OCI-LY7 (cell line): ENCODE measurements at regions of chr12 and their contacts with region 1.

Region 1: DNA sequence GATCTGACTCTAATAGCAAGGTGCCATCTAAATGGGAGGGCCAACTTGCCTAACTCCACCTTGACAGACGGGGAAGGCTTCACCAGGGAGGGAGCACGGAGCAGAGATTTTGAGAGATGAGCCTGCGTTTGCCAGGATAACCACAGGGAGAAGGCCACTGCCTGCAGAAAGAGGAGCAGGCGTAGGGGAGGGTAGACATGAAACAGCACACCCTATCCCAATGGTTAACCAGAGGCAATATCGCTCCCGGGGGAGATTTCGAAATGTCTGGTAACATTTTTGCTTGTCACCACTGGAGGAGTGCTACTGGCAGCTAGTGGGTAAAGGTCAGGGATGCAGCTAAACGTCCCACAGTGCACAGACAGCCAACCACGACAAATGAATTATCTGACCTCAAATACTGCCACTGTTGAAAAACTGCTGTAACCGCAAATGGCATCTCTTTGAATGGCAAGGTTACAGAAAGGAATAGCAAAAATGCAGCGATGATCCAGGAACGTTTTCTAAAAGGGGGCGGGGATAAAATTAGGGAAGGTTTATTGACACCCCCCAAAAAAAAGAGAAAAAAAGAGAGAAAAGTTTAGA is 126.0 kb upstream of the ATF7IP start:
- DNase-seq: peak; percentile 75
- H3K4me3 ChIP-seq: peak overlapping the region; percentile 57
- H3K27ac ChIP-seq: peak overlapping the region; percentile 94
- H3K4me1 ChIP-seq: peaks cover 32% of the 10 kb centered on the region
- CTCF ChIP-seq: peak; percentile 60

Region 2: DNA sequence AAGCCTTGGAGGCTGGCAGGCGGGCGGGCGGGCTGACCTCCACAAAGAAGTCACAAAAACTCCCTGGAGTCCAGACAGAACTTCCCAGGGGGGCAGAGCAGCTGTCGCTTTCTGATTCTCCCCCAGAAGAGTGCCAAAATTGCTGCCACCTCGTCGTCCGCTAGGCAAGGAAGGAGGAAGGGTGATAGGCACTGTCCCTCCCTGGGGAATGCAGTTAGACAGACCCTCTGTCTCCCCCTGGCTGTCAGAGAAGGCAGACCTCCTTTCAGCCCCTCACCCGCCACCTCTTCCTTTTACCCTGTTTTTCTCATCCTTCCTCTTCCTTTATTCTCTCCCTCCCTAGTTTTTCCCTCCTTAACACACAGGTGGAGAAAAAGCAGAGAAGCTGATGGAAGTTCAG is 276.7 kb before region 1 on chr12:
- CTCF ChIA-PET with region 1: no interaction called
- POLR2A ChIA-PET with region 1: no interaction called
- intact Hi-C with region 1: no loop called
- DNase-seq: peak; percentile 37
- H3K4me3 ChIP-seq: no peak overlapping the region
- H3K27ac ChIP-seq: no peak overlapping the region
- H3K4me1 ChIP-seq: no peaks in the 10 kb centered on the region
- CTCF ChIP-seq: peak; percentile 66

Region 3: DNA sequence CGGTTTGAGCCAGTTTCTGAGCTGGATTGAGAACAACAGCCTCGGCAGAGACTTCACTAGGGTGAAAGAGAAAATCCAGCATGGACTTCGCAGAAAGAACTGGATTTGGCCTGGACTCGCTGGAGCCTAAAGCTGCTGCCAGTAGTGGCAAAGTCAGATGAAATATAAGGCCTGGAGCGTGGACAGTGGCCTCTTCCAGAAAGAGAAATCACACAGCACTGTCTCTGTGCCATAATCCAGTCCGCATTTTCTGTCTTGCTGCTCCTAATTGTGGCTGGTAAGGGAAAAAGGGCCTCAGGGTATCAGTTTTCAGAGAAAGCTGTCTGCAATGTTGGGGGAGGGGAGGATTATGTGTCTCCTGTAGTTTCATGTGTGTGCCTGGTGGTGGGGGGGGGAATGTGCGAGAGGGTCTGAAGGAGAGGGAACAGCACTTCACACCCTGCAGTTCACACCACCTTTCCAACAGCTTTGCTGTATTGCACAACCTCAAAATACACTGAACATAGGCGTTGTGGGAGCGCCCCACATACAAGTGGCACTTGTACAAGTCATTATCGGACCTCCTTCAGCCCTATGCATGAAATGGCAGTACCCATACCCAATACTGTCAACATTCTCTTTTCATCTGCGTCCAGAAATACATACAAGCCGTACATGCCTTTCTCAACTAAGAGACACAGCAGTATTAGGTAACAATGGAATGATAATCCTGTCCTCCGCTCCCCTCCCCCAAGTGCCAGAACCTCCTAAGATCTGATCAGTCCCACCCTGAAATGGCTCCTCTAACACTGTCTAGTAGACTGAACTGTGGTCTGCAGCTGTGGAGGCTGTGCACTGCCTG is 18.5 kb after region 1 on chr12:
- CTCF ChIA-PET with region 1: no interaction called
- POLR2A ChIA-PET with region 1: interaction called, 6 read pairs
- intact Hi-C with region 1: loop called (anchors 2 kb)
- DNase-seq: peak; percentile 99
- H3K4me3 ChIP-seq: peak overlapping the region; percentile 56
- H3K27ac ChIP-seq: peak overlapping the region; percentile 98
- H3K4me1 ChIP-seq: peaks cover 76% of the 10 kb centered on the region
- CTCF ChIP-seq: peak; percentile 23; the same call in 1 of the 2 replicates

Region 4: DNA sequence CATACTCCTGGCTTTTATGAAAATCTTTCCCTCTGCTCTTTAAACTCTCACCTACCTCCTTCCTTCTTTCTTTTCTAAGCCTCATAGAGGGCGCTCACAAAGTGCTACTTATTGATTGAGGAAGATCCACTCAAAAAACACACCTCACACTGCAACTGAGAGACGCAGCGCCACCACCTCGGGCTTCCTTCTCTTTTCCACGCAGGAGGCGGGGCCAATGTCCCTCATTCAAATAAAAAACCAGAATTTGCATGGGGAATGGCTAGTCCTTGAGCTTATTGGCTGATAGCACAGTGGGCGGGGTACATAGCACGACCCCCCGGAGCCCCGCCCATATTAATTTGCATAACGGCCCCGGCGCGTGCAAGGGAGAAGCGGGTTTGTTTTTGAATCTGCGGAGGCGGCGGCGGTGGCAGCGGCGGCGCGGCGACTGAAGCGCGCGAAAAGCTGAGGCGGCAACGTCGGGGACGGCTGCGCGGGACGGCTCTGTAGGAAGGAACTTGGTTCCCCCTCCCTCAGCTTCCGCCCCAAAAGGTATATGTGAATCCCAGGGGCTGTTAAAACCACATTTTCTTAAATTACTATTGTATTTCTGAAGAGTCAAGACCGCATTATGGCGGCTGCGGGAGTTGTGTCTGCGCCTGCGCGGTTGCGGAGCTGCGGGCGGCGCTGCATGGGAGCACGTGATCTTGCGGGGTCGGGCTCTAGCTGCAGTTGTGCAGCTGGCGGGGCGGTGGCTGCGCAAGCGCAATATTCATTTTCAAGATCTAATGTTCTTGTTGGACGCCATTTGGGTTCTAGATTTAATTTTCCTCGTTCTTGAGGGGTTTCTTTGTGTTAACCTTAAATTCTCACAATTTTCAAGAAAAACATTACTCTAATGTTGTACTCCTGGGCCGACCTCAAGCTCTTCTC is 126.1 kb after region 1 on chr12 and contains the start of gene ATF7IP:
- CTCF ChIA-PET with region 1: interaction called, 3 read pairs
- POLR2A ChIA-PET with region 1: interaction called, 4 read pairs
- intact Hi-C with region 1: loop called (anchors 1 kb)
- DNase-seq: peak; percentile 68
- H3K4me3 ChIP-seq: peak within 1 kb of the TSS; percentile 22
- H3K27ac ChIP-seq: peak within 1 kb of the TSS; percentile 51
- H3K4me1 ChIP-seq: peaks cover 36% of the 10 kb centered on the region
- CTCF ChIP-seq: peak; percentile 75
- total RNA-seq, gene ATF7IP: 55.6 and 69.8 TPM in 2 replicates

Region 5: GRCh38 chr12:14422516-14423230 is 183.2 kb after region 1 on chr12:
- CTCF ChIA-PET with region 1: no interaction called
- POLR2A ChIA-PET with region 1: no interaction called
- intact Hi-C with region 1: no loop called
- DNase-seq: no peak
- H3K4me3 ChIP-seq: no peak overlapping the region
- H3K27ac ChIP-seq: no peak overlapping the region
- H3K4me1 ChIP-seq: peaks cover 2% of the 10 kb centered on the region
- CTCF ChIP-seq: no peak

Region 6: DNA sequence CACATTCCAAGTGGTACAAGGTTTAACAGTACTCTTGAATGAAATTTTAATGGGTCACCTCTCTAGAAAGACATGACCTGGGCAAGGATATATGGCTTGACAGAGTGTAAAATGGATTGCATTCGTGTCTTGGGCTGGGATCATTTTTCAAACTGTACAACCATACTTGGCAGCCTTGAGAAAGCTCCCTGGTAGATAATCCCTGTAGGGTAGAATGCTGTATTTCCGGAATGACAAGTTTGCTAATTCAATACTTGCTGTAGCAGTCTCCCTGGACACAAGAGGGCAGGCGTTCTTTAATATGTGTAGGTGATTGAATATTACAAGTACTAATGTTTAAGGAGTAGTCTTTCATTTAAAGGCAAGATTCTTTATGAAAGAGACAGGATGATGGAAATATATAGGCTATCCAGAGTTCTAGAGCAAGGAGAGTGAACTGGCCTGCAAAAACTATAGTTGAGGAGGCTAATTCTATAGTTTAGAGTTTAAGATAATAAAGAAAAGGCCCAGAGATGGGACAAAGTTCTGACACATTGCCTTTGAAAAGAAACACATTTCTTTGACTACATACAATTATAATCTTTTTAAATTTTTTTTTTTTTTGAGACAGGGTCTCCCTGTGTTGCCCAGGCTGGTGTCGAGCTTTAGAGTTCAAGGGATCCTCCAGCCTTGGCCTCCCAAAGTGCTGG is 274.9 kb after region 1 on chr12:
- CTCF ChIA-PET with region 1: no interaction called
- POLR2A ChIA-PET with region 1: interaction called, 7 read pairs
- intact Hi-C with region 1: loop called (anchors 1 kb)
- DNase-seq: peak; percentile 80
- H3K4me3 ChIP-seq: no peak overlapping the region
- H3K27ac ChIP-seq: no peak overlapping the region
- H3K4me1 ChIP-seq: peaks cover 6% of the 10 kb centered on the region
- CTCF ChIP-seq: peak; percentile 92

Region 7: GRCh38 chr12:14618983-14619382 is 379.5 kb after region 1 on chr12:
- CTCF ChIA-PET with region 1: no interaction called
- POLR2A ChIA-PET with region 1: interaction called, 3 read pairs
- intact Hi-C with region 1: loop called (anchors 2 kb)
- DNase-seq: peak; percentile 65
- H3K4me3 ChIP-seq: no peak overlapping the region
- H3K27ac ChIP-seq: peak overlapping the region; percentile 52
- H3K4me1 ChIP-seq: peaks cover 66% of the 10 kb centered on the region
- CTCF ChIP-seq: peak; percentile 88

Region 8: GRCh38 chr12:14664510-14664909 is 425.1 kb after region 1 on chr12:
- CTCF ChIA-PET with region 1: no interaction called
- POLR2A ChIA-PET with region 1: interaction called, 5 read pairs
- intact Hi-C with region 1: loop called (anchors 1 kb)
- DNase-seq: peak; percentile 77
- H3K4me3 ChIP-seq: no peak overlapping the region
- H3K27ac ChIP-seq: no peak overlapping the region
- H3K4me1 ChIP-seq: peaks cover 25% of the 10 kb centered on the region
- CTCF ChIP-seq: peak; percentile 96

Region 9: DNA sequence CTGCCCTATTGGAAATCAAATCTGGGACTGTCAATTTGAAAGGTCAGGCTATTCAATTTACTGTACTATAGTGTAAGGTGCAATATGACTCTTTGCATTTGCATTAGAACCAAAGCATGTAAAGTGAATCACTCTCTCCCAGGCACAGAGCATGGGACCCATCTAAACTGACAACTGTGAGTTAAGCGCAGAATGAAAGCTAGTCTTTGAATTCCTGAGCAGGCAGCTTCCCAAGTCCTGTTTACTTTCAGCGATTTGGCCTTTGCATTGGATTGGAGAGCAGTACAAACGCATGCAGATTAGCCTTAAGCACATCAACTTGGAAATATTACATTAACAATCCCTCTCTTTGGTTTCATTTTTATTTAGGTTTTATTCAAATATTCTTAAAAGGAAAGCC is 907.1 kb after region 1 on chr12:
- CTCF ChIA-PET with region 1: no interaction called
- POLR2A ChIA-PET with region 1: no interaction called
- intact Hi-C with region 1: no loop called
- DNase-seq: no peak
- H3K4me3 ChIP-seq: no peak overlapping the region
- H3K27ac ChIP-seq: no peak overlapping the region
- H3K4me1 ChIP-seq: no peaks in the 10 kb centered on the region
- CTCF ChIP-seq: no peak